ENCODE measurements at regions of chr14 and their contacts with region 1.

Region 1: GRCh38 chr14:36214476-36215216 is 38.1 kb upstream of the PTCSC3 start:
- DNase-seq: no peak
- ATAC-seq: no peak
- H3K4me3 ChIP-seq: no peak overlapping the region
- H3K4me3 Mint-ChIP-seq: no peak overlapping the region
- H3K27ac ChIP-seq: no peak overlapping the region
- H3K27ac Mint-ChIP-seq: no peak overlapping the region
- H3K4me1 ChIP-seq: no peaks in the 10 kb centered on the region
- H3K4me1 Mint-ChIP-seq: no peaks in the 10 kb centered on the region
- H3K27me3 ChIP-seq: no peaks in the 10 kb centered on the region
- H3K27me3 Mint-ChIP-seq: peaks cover 0 to 44% (median 33%) of the 10 kb centered on the region in 5 donors

Region 2: DNA sequence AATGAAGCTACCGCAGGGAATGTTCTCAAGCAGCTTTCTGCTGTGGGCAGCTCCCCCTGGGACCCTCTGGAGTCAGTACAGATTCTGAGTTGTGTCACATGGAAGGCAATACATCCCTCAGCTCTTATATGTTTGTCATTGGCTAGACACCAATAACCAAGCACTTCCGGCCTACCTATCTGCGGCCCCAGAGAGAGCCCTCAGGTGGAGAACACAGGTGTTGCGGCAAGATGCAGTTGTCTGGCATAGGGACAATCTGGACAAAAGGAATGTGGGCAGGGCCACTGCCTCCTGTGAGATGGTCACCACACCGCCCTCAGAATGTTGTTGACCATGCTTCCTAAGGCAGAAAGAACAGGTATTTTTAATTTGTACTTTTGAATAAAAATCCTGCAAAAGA is 269.8 kb before region 1 on chr14:
- CTCF ChIA-PET with region 1: no interaction called
- POLR2A ChIA-PET with region 1: no interaction called
- intact Hi-C with region 1: no loop called
- DNase-seq: peak in 3 of 9 donors; percentile 6 to 15 (median 11)
- ATAC-seq: no peak
- H3K4me3 ChIP-seq: no peak overlapping the region
- H3K4me3 Mint-ChIP-seq: no peak overlapping the region
- H3K27ac ChIP-seq: no peak overlapping the region
- H3K27ac Mint-ChIP-seq: peak overlapping the region in 1 of 9 donors; percentile 30
- H3K4me1 ChIP-seq: no peaks in the 10 kb centered on the region
- H3K4me1 Mint-ChIP-seq: peaks cover 0 to 10% (median 0%) of the 10 kb centered on the region in 7 donors
- H3K27me3 ChIP-seq: no peaks in the 10 kb centered on the region
- H3K27me3 Mint-ChIP-seq: peaks cover 0 to 3% (median 0%) of the 10 kb centered on the region in 5 donors

Region 3: GRCh38 chr14:36604757-36605505 is 390.3 kb after region 1 on chr14:
- CTCF ChIA-PET with region 1: no interaction called
- POLR2A ChIA-PET with region 1: no interaction called
- intact Hi-C with region 1: loop called in 1 of 2 experiments (anchors 5 kb)
- DNase-seq: peak in 6 of 9 donors; percentile 2 to 23 (median 5)
- ATAC-seq: no peak
- H3K4me3 ChIP-seq: no peak overlapping the region
- H3K4me3 Mint-ChIP-seq: no peak overlapping the region
- H3K27ac ChIP-seq: no peak overlapping the region
- H3K27ac Mint-ChIP-seq: no peak overlapping the region
- H3K4me1 ChIP-seq: no peaks in the 10 kb centered on the region
- H3K4me1 Mint-ChIP-seq: no peaks in the 10 kb centered on the region
- H3K27me3 ChIP-seq: no peaks in the 10 kb centered on the region
- H3K27me3 Mint-ChIP-seq: peaks cover 5 to 21% (median 14%) of the 10 kb centered on the region in 5 donors

Measured in naive thymus-derived CD4-positive, alpha-beta T cell (primary cell).